ENCODE measurements at regions of chr5 and their contacts with region 1.

Region 1: DNA sequence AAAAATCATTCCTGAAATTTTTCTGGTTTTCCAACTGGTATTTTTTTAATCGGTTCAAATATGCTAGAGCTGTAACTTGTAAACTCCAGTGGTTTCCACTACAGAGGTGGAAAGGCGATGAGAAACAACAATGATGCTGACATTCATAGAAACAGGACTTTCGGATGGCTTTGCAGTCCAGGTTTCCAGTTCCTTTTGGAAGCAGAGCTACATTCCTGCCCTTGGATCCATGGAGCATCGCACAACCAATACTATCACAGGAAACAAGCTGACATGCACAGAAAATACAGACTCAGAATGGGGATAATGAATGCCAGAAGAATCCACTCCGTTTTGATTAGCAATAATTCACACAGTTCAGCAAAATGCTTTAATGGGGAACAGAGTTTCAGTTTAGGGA is 140.0 kb downstream of the EPB41L4A start:
- DNase-seq: no peak
- H3K27ac ChIP-seq: no peak overlapping the region
- CTCF ChIP-seq: no peak

Region 2: DNA sequence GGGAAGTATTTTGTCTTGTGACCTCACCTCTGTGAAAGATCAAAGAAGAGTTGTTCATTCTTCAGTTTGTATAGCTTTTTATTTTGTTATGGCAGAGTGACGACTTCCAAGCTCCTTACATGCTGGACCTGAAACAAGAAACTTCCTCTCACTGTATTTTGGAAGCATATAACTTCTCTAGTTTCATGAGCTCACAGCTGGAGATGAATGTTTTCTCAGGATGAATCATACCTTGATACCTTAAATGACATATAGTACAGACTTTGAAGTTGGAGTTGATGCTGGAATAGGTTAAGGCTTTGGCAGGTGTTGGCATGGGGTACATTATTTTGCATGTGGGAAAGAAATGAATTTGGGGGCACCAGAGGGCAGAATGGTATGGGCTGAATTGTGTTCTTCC is 1427.7 kb before region 1 on chr5:
- CTCF ChIA-PET with region 1: no interaction called
- POLR2A ChIA-PET with region 1: no interaction called
- DNase-seq: peak; percentile 20
- H3K27ac ChIP-seq: no peak overlapping the region
- CTCF ChIP-seq: no peak

Region 3: DNA sequence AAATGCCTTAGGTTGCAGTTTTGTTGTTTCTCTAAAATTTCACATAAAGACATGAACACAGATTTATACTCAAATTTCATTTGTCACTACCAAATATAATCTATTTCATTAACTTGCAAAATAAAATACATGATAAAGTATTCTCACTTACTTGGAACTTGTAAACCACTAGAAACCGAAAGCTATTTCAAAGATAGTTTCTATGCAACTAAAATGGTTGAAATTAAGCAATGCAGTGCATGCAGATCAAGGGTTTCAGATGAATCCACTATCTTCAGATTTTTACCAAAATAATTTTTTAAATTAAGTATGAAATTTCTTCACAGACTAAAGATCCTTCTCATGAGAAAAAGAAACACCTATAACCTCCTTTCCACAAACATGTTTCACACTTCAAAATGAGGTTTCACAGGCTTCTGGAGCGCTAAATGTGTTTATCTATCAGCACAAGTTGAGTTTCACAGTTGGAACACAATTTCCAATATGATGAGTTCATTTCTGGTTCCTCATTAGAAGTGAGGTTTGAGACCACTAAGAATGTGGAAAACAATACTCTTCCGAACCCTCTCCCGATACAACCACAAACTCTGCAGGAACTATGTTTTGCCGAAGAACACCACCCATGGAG is 76.1 kb after region 1 on chr5:
- CTCF ChIA-PET with region 1: no interaction called
- POLR2A ChIA-PET with region 1: no interaction called
- DNase-seq: no peak
- H3K27ac ChIP-seq: no peak overlapping the region
- CTCF ChIP-seq: no peak

Region 4: DNA sequence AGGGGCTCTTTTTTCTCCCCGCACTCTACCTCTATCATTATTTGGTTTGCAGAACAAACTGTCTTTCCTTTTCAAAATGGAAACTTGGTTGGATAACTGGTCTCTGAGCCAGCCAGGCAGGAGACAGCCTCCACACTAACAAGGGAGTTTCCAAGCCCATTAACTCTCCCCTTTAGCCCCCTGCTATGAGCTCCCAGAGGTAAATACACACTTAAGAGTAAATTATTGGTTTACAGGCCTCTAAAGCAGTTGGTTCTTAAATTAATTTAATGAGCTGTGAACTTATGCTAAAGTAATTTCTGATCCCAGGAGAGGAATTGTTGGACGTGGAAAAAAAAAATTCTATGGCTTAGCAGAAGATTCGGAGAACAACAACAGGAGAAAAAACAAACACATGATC is 109.7 kb after region 1 on chr5:
- CTCF ChIA-PET with region 1: interaction called, 10 read pairs
- POLR2A ChIA-PET with region 1: no interaction called
- DNase-seq: no peak
- H3K27ac ChIP-seq: no peak overlapping the region
- CTCF ChIP-seq: no peak